Panc1 (cell line): ENCODE measurements at regions of chr7 and their contacts with region 1.

Region 1: GRCh38 chr7:25143763-25144162 is 18.7 kb upstream of the CYCS start:
- DNase-seq: no peak
- ATAC-seq: no peak
- H3K4me3 ChIP-seq: no peak overlapping the region
- H3K27ac ChIP-seq: no peak overlapping the region
- H3K4me1 ChIP-seq: no peaks in the 10 kb centered on the region
- H3K27me3 ChIP-seq: no peaks in the 10 kb centered on the region
- CTCF ChIP-seq: no peak

Region 2: DNA sequence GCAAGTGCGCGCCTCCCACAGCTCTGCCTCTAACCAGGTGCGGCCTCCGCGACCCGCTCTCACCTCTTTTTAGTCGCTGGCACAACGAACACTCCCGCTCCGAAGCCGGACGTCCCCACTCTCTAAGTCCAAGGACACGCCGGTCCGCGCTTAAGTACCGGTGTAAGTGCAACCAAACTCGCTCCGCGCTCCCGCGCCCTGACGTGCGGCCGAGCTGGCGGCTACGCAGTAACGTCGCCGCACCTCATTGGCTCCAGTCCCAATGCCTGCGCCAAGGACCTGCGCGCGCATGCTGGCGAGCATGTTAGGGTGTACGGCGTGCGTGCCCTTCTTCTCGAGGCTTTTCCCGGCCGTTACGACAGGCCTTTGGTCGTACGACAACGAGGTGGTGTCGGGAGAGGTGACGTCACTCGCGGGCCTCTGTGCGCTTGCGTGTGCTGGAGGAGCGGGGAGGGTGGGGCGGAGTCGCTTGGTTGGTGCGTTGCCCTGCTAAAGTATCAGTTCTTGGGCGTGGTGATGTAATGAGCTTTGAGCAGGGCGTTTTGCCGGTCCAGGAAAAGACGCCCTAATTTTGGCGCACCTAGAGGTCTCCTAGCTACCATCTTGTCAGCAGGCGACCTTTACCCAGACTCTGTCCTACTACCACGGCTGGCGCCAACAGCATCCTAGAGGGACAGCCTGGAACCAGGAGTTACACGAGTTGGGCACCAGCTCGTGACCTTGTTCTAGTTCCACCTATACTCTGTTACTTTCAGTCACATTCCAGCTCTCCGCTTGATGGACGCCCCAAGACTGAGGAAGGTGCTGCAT is 18.4 kb before region 1 on chr7 and contains the start of gene CYCS:
- CTCF ChIA-PET with region 1: no interaction called
- POLR2A ChIA-PET with region 1: interaction called, 19 read pairs
- in situ Hi-C with region 1: no loop called
- intact Hi-C with region 1: no loop called
- DNase-seq: peak; percentile 100
- ATAC-seq: peak; percentile 98
- H3K4me3 ChIP-seq: peak within 1 kb of the TSS; percentile 75 to 99
- H3K27ac ChIP-seq: peak within 1 kb of the TSS; percentile 99
- H3K4me1 ChIP-seq: 0 out of 2 replicates have a peak, but pooled peaks cover 3% of the 10 kb centered on the region
- H3K27me3 ChIP-seq: peaks cover 3% of the 10 kb centered on the region; the same call in 1 of the 2 replicates
- CTCF ChIP-seq: no peak
- total RNA-seq, gene CYCS: 245 TPM

Region 3: DNA sequence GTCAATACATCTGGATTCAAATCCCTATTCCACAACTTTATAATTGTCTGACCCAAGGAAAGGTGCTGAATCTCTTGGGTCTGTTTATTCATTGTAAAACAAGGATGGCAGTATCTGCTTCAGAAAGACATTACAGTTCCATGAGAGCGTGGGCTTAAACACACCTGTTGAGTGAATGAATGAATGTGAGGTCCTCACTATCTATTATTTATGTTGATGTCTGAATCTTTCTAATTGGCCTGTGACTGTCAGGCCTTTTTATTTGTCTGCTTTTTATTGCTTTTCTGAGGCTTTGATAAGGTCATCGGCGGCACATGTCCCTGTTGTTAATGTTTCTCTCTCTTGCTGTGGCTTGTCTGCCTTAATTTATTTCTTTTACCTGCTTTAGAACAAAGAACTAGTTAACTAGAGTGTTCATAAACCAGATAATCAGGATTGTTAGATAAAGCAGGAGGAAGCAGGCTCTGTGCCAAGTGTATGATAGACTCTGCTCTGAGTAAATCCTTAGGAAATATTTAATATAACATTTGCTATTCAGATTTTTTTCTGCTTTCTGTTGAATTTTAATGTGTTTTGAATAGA is 23.6 kb after region 1 on chr7:
- CTCF ChIA-PET with region 1: no interaction called
- POLR2A ChIA-PET with region 1: no interaction called
- in situ Hi-C with region 1: no loop called
- intact Hi-C with region 1: no loop called
- DNase-seq: no peak
- ATAC-seq: no peak
- H3K4me3 ChIP-seq: no peak overlapping the region
- H3K27ac ChIP-seq: no peak overlapping the region
- H3K4me1 ChIP-seq: no peaks in the 10 kb centered on the region
- H3K27me3 ChIP-seq: no peaks in the 10 kb centered on the region
- CTCF ChIP-seq: no peak

Region 4: GRCh38 chr7:26307226-26307625 is 1163.5 kb after region 1 on chr7:
- CTCF ChIA-PET with region 1: no interaction called
- POLR2A ChIA-PET with region 1: no interaction called
- in situ Hi-C with region 1: no loop called
- intact Hi-C with region 1: no loop called
- DNase-seq: no peak
- ATAC-seq: no peak
- H3K4me3 ChIP-seq: no peak overlapping the region
- H3K27ac ChIP-seq: no peak overlapping the region
- H3K4me1 ChIP-seq: no peaks in the 10 kb centered on the region
- H3K27me3 ChIP-seq: no peaks in the 10 kb centered on the region
- CTCF ChIP-seq: no peak